Activated naive CD4-positive, alpha-beta T cell treated with anti-CD3 and anti-CD28 coated beads for 36 hours (primary cell): ENCODE measurements at regions of chr1 and their contacts with region 1.

Region 1: DNA sequence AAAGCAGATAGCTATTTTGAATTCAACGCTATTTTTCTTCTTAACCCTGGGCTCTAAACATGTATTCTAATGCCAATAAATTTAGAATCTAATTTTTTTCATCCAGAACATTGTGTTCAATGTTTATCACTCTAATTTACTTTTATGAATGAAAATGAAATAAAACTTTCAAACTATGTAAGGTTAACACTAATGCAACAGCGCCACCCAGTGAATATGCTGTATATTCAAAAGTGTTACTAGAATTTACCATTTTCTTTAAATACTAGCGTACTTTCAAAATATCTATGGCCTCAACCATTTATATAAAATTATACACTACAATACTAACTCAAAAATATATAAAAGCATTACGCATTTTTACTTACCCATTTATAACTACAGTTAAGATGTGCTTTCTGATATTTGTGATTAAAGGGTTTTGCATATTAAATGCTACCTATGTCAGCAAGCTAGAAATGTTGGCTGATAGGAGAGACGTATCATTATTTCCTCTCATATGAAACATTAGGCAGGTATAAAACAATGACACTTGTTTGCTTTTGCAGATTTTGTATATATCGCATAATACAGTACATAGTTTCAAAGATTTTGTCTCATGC is 5.9 kb upstream of the NUF2 start:
- DNase-seq: peak; percentile 70
- H3K4me3 Mint-ChIP-seq: no peak overlapping the region
- H3K27ac Mint-ChIP-seq: no peak overlapping the region
- H3K4me1 Mint-ChIP-seq: peaks cover 2% of the 10 kb centered on the region
- H3K27me3 Mint-ChIP-seq: no peaks in the 10 kb centered on the region

Region 2: GRCh38 chr1:162753001-162753659 is 562.7 kb before region 1 on chr1:
- CTCF ChIA-PET with region 1: no interaction called
- intact Hi-C with region 1: no loop called
- DNase-seq: no peak
- H3K4me3 Mint-ChIP-seq: no peak overlapping the region
- H3K27ac Mint-ChIP-seq: no peak overlapping the region
- H3K4me1 Mint-ChIP-seq: no peaks in the 10 kb centered on the region
- H3K27me3 Mint-ChIP-seq: no peaks in the 10 kb centered on the region

Region 3: GRCh38 chr1:162854245-162854882 is 461.5 kb before region 1 on chr1:
- CTCF ChIA-PET with region 1: interaction called, 15 read pairs
- intact Hi-C with region 1: loop called (anchors 1 kb)
- DNase-seq: peak; percentile 79
- H3K4me3 Mint-ChIP-seq: no peak overlapping the region
- H3K27ac Mint-ChIP-seq: no peak overlapping the region
- H3K4me1 Mint-ChIP-seq: no peaks in the 10 kb centered on the region
- H3K27me3 Mint-ChIP-seq: no peaks in the 10 kb centered on the region

Region 4: GRCh38 chr1:162878000-162878596 is 437.8 kb before region 1 on chr1:
- CTCF ChIA-PET with region 1: interaction called, 4 read pairs
- intact Hi-C with region 1: loop called (anchors 1 kb)
- DNase-seq: peak; percentile 64
- H3K4me3 Mint-ChIP-seq: no peak overlapping the region
- H3K27ac Mint-ChIP-seq: no peak overlapping the region
- H3K4me1 Mint-ChIP-seq: no peaks in the 10 kb centered on the region
- H3K27me3 Mint-ChIP-seq: peaks cover 34% of the 10 kb centered on the region